CD4-positive, alpha-beta memory T cell (primary cell): ENCODE measurements at regions of chr11 and their contacts with region 1.

Region 1: GRCh38 chr11:59753650-59754493 is 1.3 kb upstream of the STX3 start:
- DNase-seq: peak; percentile 72 to 82 (median 79)
- H3K4me3 ChIP-seq: peak overlapping the region; percentile 62 to 79
- H3K4me3 Mint-ChIP-seq: peak overlapping the region; percentile 87 to 99 (median 96)
- H3K27ac ChIP-seq: peak overlapping the region; percentile 44
- H3K27ac Mint-ChIP-seq: peak overlapping the region; percentile 59 to 94 (median 84)
- H3K4me1 ChIP-seq: peaks cover 9% of the 10 kb centered on the region
- H3K4me1 Mint-ChIP-seq: peaks cover 16 to 42% (median 23%) of the 10 kb centered on the region in 4 donors
- H3K27me3 ChIP-seq: no peaks in the 10 kb centered on the region
- H3K27me3 Mint-ChIP-seq: peaks cover 8 to 10% of the 10 kb centered on the region in 2 donors

Region 2: DNA sequence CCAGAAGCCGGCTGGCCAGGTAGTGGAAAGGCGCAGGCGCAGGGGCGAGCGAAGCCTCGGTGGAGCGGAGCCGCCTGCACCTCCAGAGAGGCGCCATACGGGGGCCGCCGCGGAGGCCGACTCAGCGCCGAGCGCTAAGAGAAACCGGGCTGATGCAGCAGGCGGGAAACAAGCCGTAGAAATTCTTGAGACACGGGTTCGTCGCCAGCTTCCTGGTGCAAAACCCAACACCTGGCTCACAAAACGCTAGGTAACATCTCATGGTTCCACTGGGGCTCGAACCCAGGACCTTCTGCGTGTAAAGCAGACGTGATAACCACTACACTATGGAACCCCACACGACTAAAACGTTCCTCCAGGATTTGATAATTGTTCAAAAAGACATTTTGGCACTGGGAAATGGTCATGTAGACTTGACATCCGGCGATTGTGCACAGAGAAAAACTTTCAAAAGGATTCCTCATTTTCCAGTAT is 203.5 kb before region 1 on chr11:
- CTCF ChIA-PET with region 1: no interaction called
- POLR2A ChIA-PET with region 1: no interaction called
- intact Hi-C with region 1: loop called (anchors 5 kb)
- DNase-seq: peak; percentile 86 to 94 (median 87)
- H3K4me3 ChIP-seq: peak overlapping the region; percentile 19 to 61
- H3K4me3 Mint-ChIP-seq: peak overlapping the region; percentile 86 to 96 (median 88)
- H3K27ac ChIP-seq: peak overlapping the region; percentile 51
- H3K27ac Mint-ChIP-seq: peak overlapping the region; percentile 92 to 100 (median 94)
- H3K4me1 ChIP-seq: peaks cover 14% of the 10 kb centered on the region
- H3K4me1 Mint-ChIP-seq: peaks cover 16 to 52% (median 26%) of the 10 kb centered on the region in 4 donors
- H3K27me3 ChIP-seq: no peaks in the 10 kb centered on the region
- H3K27me3 Mint-ChIP-seq: peaks cover 0 to 9% of the 10 kb centered on the region in 2 donors

Region 3: GRCh38 chr11:59668950-59669610 is 84.8 kb before region 1 on chr11 and contains the start of gene PATL1:
- CTCF ChIA-PET with region 1: interaction called, 6 read pairs
- POLR2A ChIA-PET with region 1: interaction called, 13 read pairs
- intact Hi-C with region 1: loop called (anchors 1 kb)
- DNase-seq: peak; percentile 98 to 100 (median 99)
- H3K4me3 ChIP-seq: peak within 1 kb of the TSS; percentile 83 to 92
- H3K4me3 Mint-ChIP-seq: peak within 1 kb of the TSS; percentile 92 to 99 (median 96)
- H3K27ac ChIP-seq: peak within 1 kb of the TSS; percentile 99
- H3K27ac Mint-ChIP-seq: peak within 1 kb of the TSS; percentile 97 to 100 (median 100)
- H3K4me1 ChIP-seq: peaks cover 36% of the 10 kb centered on the region
- H3K4me1 Mint-ChIP-seq: peaks cover 29 to 50% (median 38%) of the 10 kb centered on the region in 4 donors
- H3K27me3 ChIP-seq: no peaks in the 10 kb centered on the region
- H3K27me3 Mint-ChIP-seq: no peaks in the 10 kb centered on the region
- total RNA-seq, gene PATL1: 45.3 to 45.5 TPM

Region 4: DNA sequence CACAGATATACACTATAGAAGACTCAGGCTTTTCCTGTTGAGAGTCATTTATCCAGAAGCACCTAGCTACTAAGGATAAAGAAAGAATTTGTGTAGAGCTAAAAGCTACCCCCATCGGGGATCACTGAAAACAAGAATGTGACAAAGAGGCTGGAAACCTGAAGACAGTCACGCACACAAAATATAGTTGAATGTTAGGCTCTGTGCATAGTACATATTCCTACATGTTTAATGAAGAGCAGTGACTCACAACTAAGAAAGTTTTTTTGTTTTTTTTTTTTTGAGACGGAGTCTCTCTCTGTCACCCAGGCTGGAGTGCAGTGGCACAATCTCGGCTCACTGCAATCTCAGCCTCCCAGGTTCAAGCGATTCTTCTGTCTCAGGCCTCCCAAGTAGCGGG is 48.6 kb before region 1 on chr11:
- CTCF ChIA-PET with region 1: no interaction called
- POLR2A ChIA-PET with region 1: no interaction called
- intact Hi-C with region 1: no loop called
- DNase-seq: no peak
- H3K4me3 ChIP-seq: no peak overlapping the region
- H3K4me3 Mint-ChIP-seq: no peak overlapping the region
- H3K27ac ChIP-seq: no peak overlapping the region
- H3K27ac Mint-ChIP-seq: no peak overlapping the region
- H3K4me1 ChIP-seq: no peaks in the 10 kb centered on the region
- H3K4me1 Mint-ChIP-seq: no peaks in the 10 kb centered on the region
- H3K27me3 ChIP-seq: no peaks in the 10 kb centered on the region
- H3K27me3 Mint-ChIP-seq: peaks cover 13 to 21% of the 10 kb centered on the region in 2 donors

Region 5: GRCh38 chr11:59776210-59777066 is 22.6 kb after region 1 on chr11:
- CTCF ChIA-PET with region 1: interaction called, 24 read pairs
- POLR2A ChIA-PET with region 1: interaction called, 5 read pairs
- intact Hi-C with region 1: no loop called
- DNase-seq: no peak
- H3K4me3 ChIP-seq: no peak overlapping the region
- H3K4me3 Mint-ChIP-seq: no peak overlapping the region
- H3K27ac ChIP-seq: no peak overlapping the region
- H3K27ac Mint-ChIP-seq: peak overlapping the region in 2 of 7 donors; percentile 30 to 55
- H3K4me1 ChIP-seq: peaks cover 16% of the 10 kb centered on the region
- H3K4me1 Mint-ChIP-seq: peaks cover 10 to 55% (median 25%) of the 10 kb centered on the region in 4 donors
- H3K27me3 ChIP-seq: no peaks in the 10 kb centered on the region
- H3K27me3 Mint-ChIP-seq: no peaks in the 10 kb centered on the region

Region 6: GRCh38 chr11:59810189-59810910 is 56.5 kb after region 1 on chr11 and contains the start of gene MRPL16:
- CTCF ChIA-PET with region 1: interaction called, 76 read pairs
- POLR2A ChIA-PET with region 1: interaction called, 18 read pairs
- intact Hi-C with region 1: loop called (anchors 2 kb)
- DNase-seq: peak; percentile 84 to 91 (median 86)
- H3K4me3 ChIP-seq: peak within 1 kb of the TSS; percentile 70 to 91
- H3K4me3 Mint-ChIP-seq: peak within 1 kb of the TSS; percentile 92 to 95 (median 93)
- H3K27ac ChIP-seq: peak within 1 kb of the TSS; percentile 71
- H3K27ac Mint-ChIP-seq: peak within 1 kb of the TSS; percentile 87 to 97 (median 91)
- H3K4me1 ChIP-seq: peaks cover 23% of the 10 kb centered on the region
- H3K4me1 Mint-ChIP-seq: peaks cover 14 to 32% (median 23%) of the 10 kb centered on the region in 4 donors
- H3K27me3 ChIP-seq: no peaks in the 10 kb centered on the region
- H3K27me3 Mint-ChIP-seq: peaks cover 0 to 2% of the 10 kb centered on the region in 2 donors
- total RNA-seq, gene MRPL16: 33.2 to 35.9 TPM

Region 7: GRCh38 chr11:60130496-60130895 is 376.6 kb after region 1 on chr11:
- CTCF ChIA-PET with region 1: no interaction called
- POLR2A ChIA-PET with region 1: no interaction called
- intact Hi-C with region 1: loop called (anchors 5 kb)
- DNase-seq: peak in 1 of 5 donors; percentile 5
- H3K4me3 ChIP-seq: no peak overlapping the region
- H3K4me3 Mint-ChIP-seq: no peak overlapping the region
- H3K27ac ChIP-seq: no peak overlapping the region
- H3K27ac Mint-ChIP-seq: no peak overlapping the region
- H3K4me1 ChIP-seq: no peaks in the 10 kb centered on the region
- H3K4me1 Mint-ChIP-seq: no peaks in the 10 kb centered on the region
- H3K27me3 ChIP-seq: no peaks in the 10 kb centered on the region
- H3K27me3 Mint-ChIP-seq: peaks cover 2 to 12% of the 10 kb centered on the region in 2 donors